Heart left ventricle (tissue), 16 donors: ENCODE measurements at regions of chr5 and their contacts with region 1.

Region 1: DNA sequence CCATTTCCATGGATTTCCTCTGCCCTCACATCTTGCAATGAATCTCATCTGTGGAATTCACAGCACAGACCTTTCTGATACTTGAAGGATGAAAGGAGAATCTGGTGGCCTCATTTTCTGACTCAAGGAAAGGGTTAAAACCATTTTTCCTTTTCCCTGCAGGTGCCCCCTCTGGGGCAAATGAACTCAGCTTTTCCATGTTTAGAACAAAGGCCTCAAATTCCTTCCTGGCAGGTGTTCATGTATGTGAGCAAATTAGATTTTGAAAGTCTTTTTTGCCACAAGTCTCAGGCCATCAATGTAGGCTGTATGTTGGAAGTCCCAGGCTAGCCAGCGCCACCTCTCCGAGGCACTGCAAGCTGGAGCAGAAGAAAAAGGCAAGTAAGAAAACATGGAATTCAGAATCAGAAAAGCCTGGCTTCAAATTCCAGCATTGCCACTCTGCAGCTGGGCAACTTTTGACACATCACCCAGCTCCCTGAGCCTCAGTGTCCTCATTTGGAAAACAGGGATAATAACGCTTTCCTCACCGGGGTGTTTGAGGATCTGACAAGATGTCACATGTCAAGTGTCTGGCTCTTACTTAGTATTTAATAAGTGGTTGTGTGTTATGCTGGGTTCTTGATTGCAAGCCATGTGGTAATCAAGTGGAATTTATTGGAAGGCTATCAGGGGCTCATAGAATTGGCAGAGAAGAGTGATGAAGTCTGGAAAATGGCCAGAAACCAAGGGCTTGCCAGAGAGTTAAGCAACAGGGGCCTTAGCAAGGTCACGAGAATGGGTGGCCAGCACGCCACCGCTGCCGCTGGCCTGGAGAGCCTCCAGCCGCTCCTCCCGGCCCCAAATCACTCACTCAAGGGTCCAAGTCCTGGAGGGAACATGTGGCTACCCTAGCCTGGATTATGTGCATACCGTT is 48.4 kb upstream of the SMIM23 start:
- DNase-seq: peak in 4 of 5 donors; percentile 64 to 81 (median 69)
- ATAC-seq: peak; percentile 75 to 87 (median 84)
- H3K4me3 ChIP-seq: peak overlapping the region in 7 of 12 donors; percentile 10 to 48 (median 35)
- H3K27ac ChIP-seq: peak overlapping the region in 11 of 12 donors; percentile 32 to 86 (median 69)
- H3K4me1 ChIP-seq: peaks cover 0 to 29% (median 12%) of the 10 kb centered on the region in 12 donors
- H3K27me3 ChIP-seq: no peaks in the 10 kb centered on the region
- CTCF ChIP-seq: peak in 4 of 12 donors; percentile 11 to 40 (median 27)
- POLR2A ChIP-seq: no peak

Region 2: GRCh38 chr5:171595801-171596231 is 141.4 kb before region 1 on chr5:
- intact Hi-C with region 1: no loop called
- DNase-seq: peak in 2 of 5 donors; percentile 47 to 70
- ATAC-seq: peak in 2 of 4 donors; percentile 16 to 64
- H3K4me3 ChIP-seq: no peak overlapping the region
- H3K27ac ChIP-seq: peak overlapping the region in 9 of 12 donors; percentile 42 to 71 (median 53)
- H3K4me1 ChIP-seq: peaks cover 0 to 23% (median 7%) of the 10 kb centered on the region in 12 donors
- H3K27me3 ChIP-seq: no peaks in the 10 kb centered on the region
- CTCF ChIP-seq: no peak
- POLR2A ChIP-seq: no peak

Region 3: DNA sequence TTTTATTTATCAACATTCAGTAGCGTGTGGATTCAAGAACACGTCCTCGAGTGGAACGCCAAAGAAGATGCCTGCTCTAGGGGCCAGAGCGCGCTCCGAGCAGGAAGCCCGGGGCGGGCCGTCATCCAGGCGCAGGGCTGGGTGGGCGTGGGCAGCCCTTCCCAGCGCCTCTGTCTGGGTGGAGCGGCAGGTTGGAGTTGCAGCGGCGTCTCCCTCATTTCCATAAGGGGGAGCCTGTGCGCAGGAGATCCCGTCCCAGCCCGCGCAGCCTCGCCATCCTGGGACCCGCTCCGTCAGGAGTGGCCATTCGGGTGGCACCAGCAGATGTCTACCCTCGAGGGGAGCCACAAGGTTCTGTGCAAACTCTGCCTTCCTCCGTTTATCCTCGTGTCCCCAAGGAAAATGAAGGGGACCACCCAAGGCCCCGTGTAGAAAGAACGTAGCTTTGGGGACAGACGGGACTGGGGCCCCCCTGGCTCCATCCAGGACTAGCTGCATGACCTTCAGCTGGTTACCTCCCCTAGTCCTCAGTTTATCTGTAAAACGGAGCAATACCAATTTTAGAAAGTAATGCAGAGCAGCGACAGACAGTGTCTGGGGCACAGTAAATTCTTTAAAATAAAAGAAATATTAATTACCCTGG is 107.1 kb before region 1 on chr5:
- intact Hi-C with region 1: loop called in 5 of 10 experiments (anchors 5 to 10 kb)
- DNase-seq: peak; percentile 68 to 83 (median 71)
- ATAC-seq: peak; percentile 87 to 97 (median 93)
- H3K4me3 ChIP-seq: peak overlapping the region in 5 of 12 donors; percentile 8 to 32 (median 9)
- H3K27ac ChIP-seq: no peak overlapping the region
- H3K4me1 ChIP-seq: peaks cover 0 to 31% (median 8%) of the 10 kb centered on the region in 12 donors
- H3K27me3 ChIP-seq: no peaks in the 10 kb centered on the region
- CTCF ChIP-seq: peak in 11 of 12 donors; percentile 21 to 71 (median 64)
- POLR2A ChIP-seq: no peak

Region 4: DNA sequence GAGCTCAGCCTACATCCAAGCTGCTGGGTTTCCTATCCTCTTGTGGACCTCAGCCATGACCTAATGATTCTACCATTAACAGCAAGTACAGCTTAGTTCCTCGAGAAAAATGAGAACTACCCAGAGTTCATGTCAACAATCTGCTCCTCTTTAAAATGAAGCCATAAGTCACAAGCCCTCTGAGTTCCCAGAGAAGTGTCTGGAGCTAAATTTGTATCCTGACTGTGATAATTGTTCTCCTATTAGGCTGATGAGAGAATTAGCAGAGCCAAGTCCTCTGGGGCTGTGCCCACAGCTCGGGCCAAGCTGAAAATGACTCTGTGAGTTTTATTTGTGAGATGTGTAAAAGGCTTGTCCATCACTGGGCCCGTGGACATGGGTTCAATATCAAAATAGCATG is 96.8 kb before region 1 on chr5:
- intact Hi-C with region 1: loop called in 5 of 10 experiments (anchors 2 to 10 kb)
- DNase-seq: peak in 4 of 5 donors; percentile 49 to 79 (median 68)
- ATAC-seq: peak; percentile 84 to 92 (median 90)
- H3K4me3 ChIP-seq: no peak overlapping the region
- H3K27ac ChIP-seq: peak overlapping the region; percentile 58 to 93 (median 76)
- H3K4me1 ChIP-seq: peaks cover 0 to 30% (median 14%) of the 10 kb centered on the region in 12 donors
- H3K27me3 ChIP-seq: no peaks in the 10 kb centered on the region
- CTCF ChIP-seq: no peak
- POLR2A ChIP-seq: no peak

Region 5: GRCh38 chr5:171647032-171647903 is 90.0 kb before region 1 on chr5:
- intact Hi-C with region 1: loop called in 2 of 10 experiments (anchors 2 to 10 kb)
- DNase-seq: peak in 2 of 5 donors; percentile 31 to 48
- ATAC-seq: peak; percentile 57 to 81 (median 73)
- H3K4me3 ChIP-seq: no peak overlapping the region
- H3K27ac ChIP-seq: peak overlapping the region in 7 of 12 donors; percentile 13 to 65 (median 54)
- H3K4me1 ChIP-seq: peaks cover 0 to 8% (median 0%) of the 10 kb centered on the region in 12 donors
- H3K27me3 ChIP-seq: no peaks in the 10 kb centered on the region
- CTCF ChIP-seq: no peak
- POLR2A ChIP-seq: no peak

Region 6: DNA sequence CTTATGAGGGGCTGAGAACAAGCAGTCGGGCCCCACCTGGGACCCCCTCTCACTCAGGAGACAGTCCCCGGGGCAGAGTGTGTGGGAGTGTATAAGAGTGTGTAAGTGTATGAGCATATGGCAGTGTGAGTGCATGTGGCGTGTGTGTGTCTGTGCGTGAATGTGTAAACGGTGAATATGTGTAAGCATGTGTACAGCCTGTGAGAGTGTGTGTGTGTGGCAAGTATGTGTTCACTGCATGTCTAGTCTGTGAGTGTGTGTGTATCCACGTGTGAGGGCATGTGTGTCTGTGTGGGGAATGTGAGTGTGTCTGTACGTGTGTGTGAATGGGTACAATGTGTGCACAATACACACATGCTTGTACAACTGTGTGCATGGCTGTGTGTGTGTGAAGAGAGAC is 39.6 kb before region 1 on chr5:
- intact Hi-C with region 1: loop called in 1 of 10 experiments (anchors 5 kb)
- DNase-seq: no peak
- ATAC-seq: no peak
- H3K4me3 ChIP-seq: no peak overlapping the region
- H3K27ac ChIP-seq: no peak overlapping the region
- H3K4me1 ChIP-seq: peaks cover 0 to 30% (median 2%) of the 10 kb centered on the region in 12 donors
- H3K27me3 ChIP-seq: no peaks in the 10 kb centered on the region
- CTCF ChIP-seq: no peak
- POLR2A ChIP-seq: no peak

Region 7: GRCh38 chr5:171709918-171710317 is 27.3 kb before region 1 on chr5:
- intact Hi-C with region 1: loop called in 1 of 10 experiments (anchors 1 kb)
- DNase-seq: peak in 4 of 5 donors; percentile 64 to 87 (median 72)
- ATAC-seq: peak; percentile 93 to 98 (median 98)
- H3K4me3 ChIP-seq: no peak overlapping the region
- H3K27ac ChIP-seq: peak overlapping the region; percentile 38 to 93 (median 70)
- H3K4me1 ChIP-seq: peaks cover 0 to 19% (median 2%) of the 10 kb centered on the region in 12 donors
- H3K27me3 ChIP-seq: no peaks in the 10 kb centered on the region
- CTCF ChIP-seq: no peak
- POLR2A ChIP-seq: no peak

Region 8: DNA sequence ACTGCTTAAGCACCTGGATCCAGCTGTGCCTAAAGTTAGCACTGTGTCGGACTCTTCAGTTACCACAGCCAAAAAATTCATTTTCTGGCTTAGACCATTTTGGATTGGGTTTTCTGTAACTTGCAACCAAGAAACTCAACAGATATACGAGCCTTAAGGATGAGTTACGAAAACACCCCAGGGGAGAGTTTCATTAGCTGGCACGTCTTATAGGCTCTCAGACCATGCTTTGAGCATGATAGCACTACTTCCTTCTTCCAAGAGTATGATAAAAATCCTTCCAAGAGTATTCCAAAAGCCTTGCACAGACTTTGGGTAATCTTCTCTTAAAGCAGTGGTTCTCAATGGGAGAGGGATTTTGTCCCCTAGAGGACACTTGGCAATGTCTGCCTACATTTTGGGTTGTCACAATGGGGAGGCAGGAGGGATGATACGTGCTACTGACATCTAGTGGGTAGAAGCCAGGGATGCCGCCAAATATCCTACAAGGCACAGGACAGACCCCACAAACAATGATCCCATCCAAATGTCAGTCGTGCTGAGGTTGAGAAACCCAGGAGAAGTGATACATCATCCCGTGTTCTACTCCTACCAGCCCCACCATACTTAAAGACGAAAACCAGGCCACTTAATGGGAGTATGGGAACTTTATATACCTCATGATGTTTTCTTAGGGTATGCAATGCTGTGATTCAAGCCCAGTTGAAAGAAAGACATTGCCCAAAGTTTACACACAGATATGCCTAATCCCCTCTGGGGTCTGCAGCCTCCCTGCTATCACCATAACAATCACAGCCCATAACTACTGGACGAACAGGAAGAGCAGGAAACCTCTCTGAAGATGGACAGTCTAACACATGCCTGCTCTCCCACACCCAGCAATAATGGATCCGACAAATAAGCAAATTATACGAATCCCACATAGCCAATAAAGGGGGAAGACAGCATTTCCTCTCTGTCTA is 113.4 kb after region 1 on chr5:
- intact Hi-C with region 1: loop called in 2 of 10 experiments (anchors 5 to 10 kb)
- DNase-seq: no peak
- ATAC-seq: peak in 3 of 4 donors; percentile 8 to 39 (median 31)
- H3K4me3 ChIP-seq: no peak overlapping the region
- H3K27ac ChIP-seq: peak overlapping the region in 1 of 12 donors; percentile 36
- H3K4me1 ChIP-seq: peaks cover 0 to 16% (median 0%) of the 10 kb centered on the region in 12 donors
- H3K27me3 ChIP-seq: no peaks in the 10 kb centered on the region
- CTCF ChIP-seq: peak in 6 of 12 donors; percentile 16 to 36 (median 30)
- POLR2A ChIP-seq: no peak

Region 9: DNA sequence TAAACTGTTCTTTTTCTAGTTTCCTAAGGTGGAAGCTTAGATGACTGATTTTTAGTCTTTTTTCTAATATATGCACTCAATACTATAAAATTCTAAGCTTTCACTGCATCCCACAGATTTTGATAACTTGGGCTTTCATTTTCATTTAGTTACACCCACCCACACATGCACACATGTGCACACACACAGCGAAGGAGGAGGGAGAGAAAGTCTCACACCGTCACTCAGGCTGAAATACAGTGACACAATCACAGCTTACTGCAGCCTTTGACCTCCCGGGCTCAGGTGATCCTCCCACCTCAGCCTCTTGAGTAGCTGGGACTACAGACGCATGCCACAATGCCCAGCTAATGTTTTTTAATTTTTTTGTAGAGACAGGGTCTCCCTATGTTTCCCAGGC is 144.9 kb after region 1 on chr5:
- intact Hi-C with region 1: no loop called
- DNase-seq: no peak
- ATAC-seq: no peak
- H3K4me3 ChIP-seq: no peak overlapping the region
- H3K27ac ChIP-seq: no peak overlapping the region
- H3K4me1 ChIP-seq: peaks cover 0 to 3% (median 0%) of the 10 kb centered on the region in 12 donors
- H3K27me3 ChIP-seq: no peaks in the 10 kb centered on the region
- CTCF ChIP-seq: no peak
- POLR2A ChIP-seq: no peak

Region 10: DNA sequence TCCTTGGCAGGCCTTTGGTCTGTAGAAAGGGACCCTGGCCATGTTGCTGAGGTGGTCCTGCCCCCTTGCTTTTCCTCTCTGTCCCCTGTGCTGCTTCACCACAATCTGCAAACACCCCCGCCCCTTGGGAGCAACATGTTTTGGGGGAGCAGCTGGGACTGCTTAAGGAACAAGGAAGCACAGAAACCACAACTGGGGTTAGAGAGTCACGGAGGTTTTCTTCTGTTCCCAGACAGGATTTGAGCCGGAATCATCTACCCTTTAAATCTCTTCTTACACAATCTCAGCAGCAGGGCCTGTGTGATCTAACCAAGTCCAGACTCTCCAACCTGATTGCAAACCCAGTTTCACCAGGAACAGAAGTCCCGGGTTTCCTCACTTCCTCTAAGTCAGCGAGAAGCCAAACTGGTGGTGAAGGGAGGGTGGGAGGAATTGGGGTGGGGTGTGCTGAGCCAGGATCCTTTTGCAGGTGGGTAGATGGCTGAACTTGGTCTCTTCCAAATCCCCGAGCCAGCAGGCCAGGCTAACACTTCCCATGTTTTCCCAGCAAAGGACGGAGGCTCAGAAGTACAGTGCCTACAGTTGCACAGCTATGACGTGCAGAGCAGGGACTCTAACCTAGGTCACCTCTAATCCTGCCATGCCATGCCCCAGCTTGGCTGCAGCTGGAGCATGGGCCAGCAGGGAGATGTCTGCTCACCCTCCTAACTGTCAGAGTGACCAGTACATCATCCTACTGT is 692.1 kb after region 1 on chr5:
- intact Hi-C with region 1: no loop called
- DNase-seq: peak in 1 of 5 donors; percentile 69
- ATAC-seq: peak; percentile 39 to 78 (median 71)
- H3K4me3 ChIP-seq: no peak overlapping the region
- H3K27ac ChIP-seq: peak overlapping the region; percentile 25 to 87 (median 66)
- H3K4me1 ChIP-seq: peaks cover 3 to 48% (median 20%) of the 10 kb centered on the region in 12 donors
- H3K27me3 ChIP-seq: no peaks in the 10 kb centered on the region
- CTCF ChIP-seq: no peak
- POLR2A ChIP-seq: no peak